MCF 10A (cell line): ENCODE measurements at regions of chr2 and their contacts with region 1.

Region 1: GRCh38 chr2:15673927-15674636 is 82.4 kb downstream of the DDX1 start:
- DNase-seq: peak; percentile 81
- H3K4me3 Mint-ChIP-seq: no peak overlapping the region
- H3K27ac Mint-ChIP-seq: peak overlapping the region; percentile 39
- H3K4me1 Mint-ChIP-seq: peaks cover 21% of the 10 kb centered on the region
- H3K27me3 Mint-ChIP-seq: no peaks in the 10 kb centered on the region
- CTCF ChIP-seq: no peak

Region 2: GRCh38 chr2:15577071-15577735 is 96.9 kb before region 1 on chr2:
- CTCF ChIA-PET with region 1: no interaction called
- POLR2A ChIA-PET with region 1: no interaction called
- intact Hi-C with region 1: no loop called
- DNase-seq: peak; percentile 93
- H3K4me3 Mint-ChIP-seq: no peak overlapping the region
- H3K27ac Mint-ChIP-seq: no peak overlapping the region
- H3K4me1 Mint-ChIP-seq: no peaks in the 10 kb centered on the region
- H3K27me3 Mint-ChIP-seq: no peaks in the 10 kb centered on the region
- CTCF ChIP-seq: peak; percentile 69

Region 3: DNA sequence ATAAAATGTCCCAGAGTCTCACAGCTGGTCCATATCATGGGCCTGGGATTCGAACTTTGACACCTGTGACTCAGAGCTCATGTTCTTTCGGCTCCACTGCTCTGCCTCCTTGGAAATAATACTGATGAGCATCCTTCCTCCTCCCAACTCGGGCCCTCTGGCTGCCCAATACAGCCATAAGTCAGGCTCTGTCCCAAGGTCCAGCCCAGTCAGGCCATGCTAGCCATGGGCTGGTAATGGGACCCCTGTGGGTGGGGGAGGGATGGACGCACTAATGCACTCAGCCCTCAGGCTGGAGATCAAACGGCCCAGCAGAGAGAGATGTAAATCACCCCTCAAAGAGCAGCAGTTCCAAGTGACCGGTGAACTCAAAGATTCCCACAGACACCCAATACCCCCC is 21.3 kb before region 1 on chr2:
- CTCF ChIA-PET with region 1: no interaction called
- POLR2A ChIA-PET with region 1: no interaction called
- intact Hi-C with region 1: no loop called
- DNase-seq: no peak
- H3K4me3 Mint-ChIP-seq: no peak overlapping the region
- H3K27ac Mint-ChIP-seq: no peak overlapping the region
- H3K4me1 Mint-ChIP-seq: no peaks in the 10 kb centered on the region
- H3K27me3 Mint-ChIP-seq: peaks cover 49% of the 10 kb centered on the region
- CTCF ChIP-seq: no peak

Region 4: DNA sequence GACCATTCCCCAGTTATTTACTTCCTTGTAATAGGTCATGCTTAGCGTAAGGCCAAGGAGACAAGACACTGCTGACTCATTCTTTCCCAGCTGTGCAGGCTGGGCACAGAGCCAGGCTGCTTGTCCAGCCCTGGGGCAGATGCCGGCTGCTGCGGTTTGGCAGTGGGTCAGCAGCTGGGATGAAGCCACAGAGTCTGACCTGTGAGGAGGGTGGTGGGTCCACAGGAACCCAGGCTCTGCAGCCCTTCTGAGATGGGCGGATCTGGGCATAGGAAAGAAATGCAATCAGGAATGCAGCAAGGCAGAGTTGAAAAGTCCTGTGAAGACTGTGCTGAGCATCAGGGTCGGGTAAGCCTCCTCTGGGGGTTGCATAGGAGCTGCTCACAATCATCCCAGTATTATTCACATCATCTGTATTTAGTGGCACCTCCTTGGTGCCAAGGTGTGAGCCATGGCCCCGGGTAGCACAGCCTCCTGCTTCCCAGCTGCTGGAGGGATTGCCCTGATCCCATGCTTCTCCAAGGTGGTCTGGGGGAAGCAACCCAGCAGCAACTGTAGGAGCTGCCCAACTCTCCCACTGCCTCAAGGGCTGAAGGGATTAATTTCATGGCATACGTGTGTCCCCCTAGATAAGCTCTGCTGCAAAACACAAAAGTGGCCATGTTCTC is 56.6 kb after region 1 on chr2:
- CTCF ChIA-PET with region 1: no interaction called
- POLR2A ChIA-PET with region 1: no interaction called
- intact Hi-C with region 1: loop called (anchors 1 kb)
- DNase-seq: peak; percentile 97
- H3K4me3 Mint-ChIP-seq: no peak overlapping the region
- H3K27ac Mint-ChIP-seq: no peak overlapping the region
- H3K4me1 Mint-ChIP-seq: peaks cover 29% of the 10 kb centered on the region
- H3K27me3 Mint-ChIP-seq: peaks cover 99% of the 10 kb centered on the region
- CTCF ChIP-seq: no peak